Aorta (tissue), 5 donors: ENCODE measurements at regions of chr12 and their contacts with region 1.

Region 1: DNA sequence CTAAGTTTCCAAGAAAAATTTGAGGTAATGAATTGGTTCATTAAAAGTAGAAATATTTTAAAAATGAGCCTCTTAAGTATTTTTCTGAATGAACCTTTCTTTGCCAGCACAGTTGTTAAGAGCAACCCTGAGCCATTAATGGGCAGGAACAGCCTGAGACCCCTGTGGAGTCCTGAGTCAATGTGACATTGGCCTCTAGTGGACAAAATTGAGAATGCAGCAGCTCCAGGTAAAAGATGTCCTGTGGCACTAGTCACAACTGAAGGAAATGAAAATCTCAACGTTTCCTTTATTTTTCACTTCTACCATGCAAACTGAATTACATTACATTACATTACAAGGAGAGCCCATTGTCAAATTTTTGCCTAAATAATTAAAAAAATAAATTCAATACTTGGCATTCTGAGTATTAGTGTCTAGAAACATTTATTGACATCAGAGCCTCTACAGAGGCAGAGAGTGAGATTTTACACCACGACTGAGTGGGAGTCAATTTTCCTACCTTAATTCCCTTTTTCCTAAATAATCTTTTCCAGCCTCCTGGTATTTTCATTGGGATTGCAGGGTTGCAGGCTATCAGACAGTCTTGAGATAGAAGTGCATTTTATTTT is 135.7 kb downstream of the PPM1H start:
- DNase-seq: no peak
- ATAC-seq: no peak
- H3K4me3 ChIP-seq: no peak overlapping the region
- H3K27ac ChIP-seq: no peak overlapping the region
- H3K4me1 ChIP-seq: no peaks in the 10 kb centered on the region
- H3K27me3 ChIP-seq: no peaks in the 10 kb centered on the region

Region 2: DNA sequence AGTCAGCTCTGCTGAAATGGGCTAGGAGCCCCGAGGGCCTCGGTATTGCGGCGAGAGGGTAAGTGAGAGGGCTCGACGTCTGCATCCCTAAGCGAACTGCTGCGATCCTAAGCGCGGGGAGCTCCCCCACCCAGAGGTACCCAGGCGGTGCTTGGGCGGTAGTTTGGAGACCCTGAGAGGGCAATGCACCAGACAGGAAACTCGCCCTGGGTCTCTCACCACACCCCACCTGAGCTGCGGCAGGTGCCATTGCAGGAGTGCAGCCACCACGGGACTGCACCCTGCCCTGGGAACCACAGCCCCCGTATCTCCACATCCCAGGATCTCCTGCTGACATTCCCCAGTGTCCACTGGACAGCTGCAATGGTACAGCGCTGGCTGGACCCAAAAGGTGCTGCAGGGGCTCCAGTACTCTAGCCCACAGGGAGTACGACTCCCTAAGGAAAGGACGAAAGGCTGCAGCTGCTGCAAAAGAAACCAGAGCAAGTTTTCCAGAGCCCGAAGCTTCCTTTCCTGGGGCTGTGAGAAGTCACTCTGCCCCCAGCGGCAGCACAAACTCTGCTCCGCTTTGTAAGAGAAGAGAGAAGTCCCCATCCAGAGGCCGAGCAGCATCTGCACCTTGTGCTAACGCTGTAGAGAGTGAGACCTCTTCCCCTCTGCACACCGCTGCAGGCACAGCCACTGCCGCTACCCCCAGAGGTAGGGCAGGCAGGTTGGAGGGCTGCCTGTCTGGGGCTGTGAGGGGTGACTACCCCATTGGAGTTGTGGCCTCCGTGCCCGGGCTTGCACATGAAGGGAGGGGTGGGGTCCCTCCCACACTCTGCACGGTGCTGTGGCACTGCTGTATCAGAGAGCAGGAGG is 363.7 kb before region 1 on chr12:
- intact Hi-C with region 1: loop called (anchors 5 kb)
- DNase-seq: peak; percentile 77 to 78
- ATAC-seq: peak; percentile 87
- H3K4me3 ChIP-seq: peak overlapping the region; percentile 23 to 32
- H3K27ac ChIP-seq: no peak overlapping the region
- H3K4me1 ChIP-seq: no peaks in the 10 kb centered on the region
- H3K27me3 ChIP-seq: no peaks in the 10 kb centered on the region

Region 3: DNA sequence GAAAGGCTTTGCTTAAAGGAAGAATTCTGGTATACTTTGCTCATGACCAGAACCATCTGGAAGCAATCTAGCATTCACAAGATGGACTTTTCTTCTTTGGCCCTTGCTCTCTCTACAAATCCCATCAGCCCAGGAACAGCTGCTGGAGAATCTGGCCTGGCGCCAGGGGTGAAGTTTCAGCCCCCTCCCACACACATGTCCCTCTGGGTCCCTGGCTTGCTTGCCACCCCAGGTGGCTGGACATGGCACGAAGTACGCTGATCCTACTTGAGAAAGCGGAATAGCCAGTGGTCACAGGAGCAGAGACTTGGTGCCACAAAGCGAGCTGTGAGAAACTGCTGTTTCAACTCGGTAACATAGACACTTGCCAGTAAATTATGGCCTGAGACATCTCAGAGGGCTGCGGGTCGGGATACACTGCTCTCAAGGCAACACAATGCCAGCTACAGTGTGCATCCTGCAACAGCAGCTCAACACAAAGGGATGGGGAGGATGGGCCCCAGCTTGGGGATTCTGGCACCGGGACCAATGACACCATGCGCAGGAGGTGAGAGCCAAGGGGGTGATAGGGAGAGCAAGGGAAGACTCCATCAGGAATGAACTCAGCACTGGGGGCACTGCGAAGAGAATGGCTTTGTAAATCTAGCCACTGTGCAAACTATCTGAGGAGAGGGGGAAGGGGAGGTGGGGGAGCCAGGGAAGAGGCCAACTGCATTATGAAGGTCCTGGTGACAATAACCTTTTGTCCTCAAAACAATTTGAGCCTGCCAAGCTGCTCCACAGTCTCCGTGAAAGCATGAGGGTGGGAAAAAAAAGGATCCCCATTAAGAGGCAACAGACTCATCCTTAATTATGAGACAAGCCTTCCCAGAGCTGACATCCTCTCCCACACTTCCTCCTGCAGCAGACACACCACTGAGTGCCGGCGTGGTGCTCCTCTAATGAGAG is 84.2 kb before region 1 on chr12:
- intact Hi-C with region 1: no loop called
- DNase-seq: no peak
- ATAC-seq: peak; percentile 27
- H3K4me3 ChIP-seq: no peak overlapping the region
- H3K27ac ChIP-seq: no peak overlapping the region
- H3K4me1 ChIP-seq: no peaks in the 10 kb centered on the region
- H3K27me3 ChIP-seq: no peaks in the 10 kb centered on the region

Region 4: DNA sequence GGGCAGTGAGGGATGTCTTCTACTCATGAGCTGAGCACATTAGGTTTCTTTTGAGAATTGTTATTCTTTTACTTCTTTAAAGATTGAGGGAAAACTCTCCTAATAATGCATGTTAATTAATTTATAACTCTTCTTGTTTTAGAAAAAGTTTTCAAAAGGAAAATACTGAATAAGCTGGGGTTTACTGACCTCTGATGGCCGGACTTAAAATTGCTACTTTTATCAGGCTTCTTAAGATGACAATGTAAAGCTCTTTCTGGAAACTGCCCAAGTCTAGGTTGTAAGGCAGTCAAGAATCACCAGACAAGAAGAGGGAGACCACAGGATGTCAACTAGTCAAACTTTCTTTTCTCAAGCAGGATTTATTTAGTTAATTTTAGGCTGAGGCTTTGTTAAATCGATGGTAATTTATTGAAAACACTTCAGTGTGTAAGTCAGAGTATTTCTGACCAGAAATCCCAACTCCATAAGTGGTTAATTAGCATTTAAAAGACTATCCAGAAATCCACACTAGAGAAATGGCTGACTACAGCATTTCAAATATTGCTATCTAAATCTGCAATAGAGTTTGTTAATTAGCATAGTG is 269.7 kb after region 1 on chr12:
- intact Hi-C with region 1: loop called in 1 of 2 experiments (anchors 5 kb)
- DNase-seq: no peak
- ATAC-seq: no peak
- H3K4me3 ChIP-seq: no peak overlapping the region
- H3K27ac ChIP-seq: no peak overlapping the region
- H3K4me1 ChIP-seq: no peaks in the 10 kb centered on the region
- H3K27me3 ChIP-seq: no peaks in the 10 kb centered on the region